Transverse colon (tissue), 4 donors: ENCODE measurements at regions of chr13 and their contacts with region 1.

Region 1: GRCh38 chr13:111228262-111229144 is 91.9 kb upstream of the TEX29 start:
- DNase-seq: no peak
- H3K4me3 ChIP-seq: no peak overlapping the region
- H3K27ac ChIP-seq: no peak overlapping the region
- H3K4me1 ChIP-seq: peaks cover 0 to 7% (median 2%) of the 10 kb centered on the region in 4 donors
- H3K27me3 ChIP-seq: no peaks in the 10 kb centered on the region
- CTCF ChIP-seq: no peak
- EP300 ChIP-seq: no peak
- POLR2A ChIP-seq: no peak

Region 2: DNA sequence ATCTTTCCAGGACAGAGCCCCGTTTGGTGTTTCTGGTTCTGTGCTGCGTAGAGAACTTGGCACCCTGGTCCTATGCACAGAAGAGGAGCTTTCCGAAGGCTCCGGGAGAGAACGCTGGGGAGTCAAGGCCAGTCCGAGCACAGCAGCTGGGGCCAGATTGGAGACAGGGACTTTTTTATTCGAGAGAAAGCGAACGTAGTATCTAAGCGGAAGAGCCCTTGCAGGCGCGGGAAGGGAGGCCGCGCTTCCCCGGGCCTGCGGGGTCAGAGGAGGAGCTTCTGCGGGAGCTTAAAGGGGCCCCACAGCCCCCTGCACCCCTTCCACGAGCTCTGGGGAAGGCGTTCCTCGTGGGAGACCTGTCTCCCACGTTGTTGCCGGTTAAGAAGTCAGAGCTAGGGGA is 162.0 kb before region 1 on chr13:
- in situ Hi-C with region 1: loop called in 3 of 4 experiments (anchors 10 kb)
- intact Hi-C with region 1: loop called (anchors 5 kb)
- DNase-seq: no peak
- H3K4me3 ChIP-seq: peak overlapping the region in 2 of 4 donors; percentile 51 to 58
- H3K27ac ChIP-seq: peak overlapping the region in 2 of 4 donors; percentile 6 to 43
- H3K4me1 ChIP-seq: peaks cover 0 to 10% (median 4%) of the 10 kb centered on the region in 4 donors
- H3K27me3 ChIP-seq: peaks cover 22% of the 10 kb centered on the region
- CTCF ChIP-seq: no peak
- EP300 ChIP-seq: no peak
- POLR2A ChIP-seq: no peak

Region 3: GRCh38 chr13:111076156-111077013 is 152.1 kb before region 1 on chr13:
- in situ Hi-C with region 1: loop called in 2 of 4 experiments (anchors 10 kb)
- intact Hi-C with region 1: no loop called
- DNase-seq: no peak
- H3K4me3 ChIP-seq: no peak overlapping the region
- H3K27ac ChIP-seq: no peak overlapping the region
- H3K4me1 ChIP-seq: no peaks in the 10 kb centered on the region
- H3K27me3 ChIP-seq: no peaks in the 10 kb centered on the region
- CTCF ChIP-seq: no peak
- EP300 ChIP-seq: no peak
- POLR2A ChIP-seq: no peak